PC-9 (cell line): ENCODE measurements at regions of chrX and their contacts with region 1.

Region 1: DNA sequence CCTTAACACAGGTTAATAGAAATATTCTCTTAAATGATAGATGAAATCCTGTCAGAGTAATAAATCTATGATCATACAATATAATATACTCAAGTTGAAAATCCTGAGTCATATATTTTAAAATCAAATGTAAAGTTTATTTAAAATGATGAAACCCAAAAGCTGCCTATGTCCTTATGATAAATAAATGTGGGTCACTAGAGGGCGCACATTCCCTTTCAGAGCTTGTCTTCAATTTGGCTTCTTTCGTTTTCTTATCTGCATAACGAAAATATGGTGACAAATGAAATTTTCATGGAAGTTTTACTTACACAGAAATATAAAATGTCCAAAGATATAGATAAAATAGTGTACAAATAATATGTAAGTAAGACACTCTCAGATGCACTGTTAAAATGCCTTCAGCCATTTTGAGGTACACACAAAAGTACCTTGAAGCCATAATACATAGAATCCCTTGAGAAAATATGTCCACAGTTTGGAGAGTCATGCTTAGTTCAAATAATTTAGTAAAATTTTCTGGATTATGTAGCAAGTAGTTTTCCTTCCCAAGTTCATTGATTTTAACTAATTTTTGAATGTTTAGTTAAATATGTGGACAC is 680.4 kb downstream of the DMD start:
- DNase-seq: peak in 1 of 2 experiments; percentile 0
- H3K4me3 ChIP-seq: no peak overlapping the region; the same call in 1 of the 2 replicates
- H3K27ac ChIP-seq: no peak overlapping the region
- H3K4me1 ChIP-seq: no peaks in the 10 kb centered on the region
- H3K27me3 ChIP-seq: no peaks in the 10 kb centered on the region
- CTCF ChIP-seq: peak; percentile 74

Region 2: DNA sequence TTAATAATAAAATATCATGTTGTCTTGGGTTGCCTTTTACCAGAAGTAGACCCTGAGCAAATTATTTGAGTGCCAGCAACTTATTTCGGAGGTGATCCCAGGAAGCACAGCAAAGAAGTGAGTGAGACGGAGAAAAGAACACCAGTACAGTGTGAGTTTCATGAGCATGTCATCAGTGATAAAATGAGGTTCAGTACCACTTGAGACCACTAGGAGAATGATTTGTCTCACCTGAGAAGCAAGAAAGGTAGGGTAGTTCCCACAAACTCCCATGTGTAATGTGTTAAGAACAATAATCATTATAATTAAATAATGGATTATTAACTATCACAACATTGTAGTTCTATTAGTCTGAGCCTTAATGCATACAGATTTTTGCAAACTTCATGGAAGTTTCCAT is 793.2 kb after region 1 on chrX:
- CTCF ChIA-PET with region 1: interaction called, 12 read pairs
- POLR2A ChIA-PET with region 1: no interaction called
- intact Hi-C with region 1: no loop called
- DNase-seq: no peak
- H3K4me3 ChIP-seq: no peak overlapping the region
- H3K27ac ChIP-seq: no peak overlapping the region
- H3K4me1 ChIP-seq: no peaks in the 10 kb centered on the region
- H3K27me3 ChIP-seq: no peaks in the 10 kb centered on the region
- CTCF ChIP-seq: 0 out of 2 replicates have a peak, but pooled peaks have one; percentile 27

Region 3: DNA sequence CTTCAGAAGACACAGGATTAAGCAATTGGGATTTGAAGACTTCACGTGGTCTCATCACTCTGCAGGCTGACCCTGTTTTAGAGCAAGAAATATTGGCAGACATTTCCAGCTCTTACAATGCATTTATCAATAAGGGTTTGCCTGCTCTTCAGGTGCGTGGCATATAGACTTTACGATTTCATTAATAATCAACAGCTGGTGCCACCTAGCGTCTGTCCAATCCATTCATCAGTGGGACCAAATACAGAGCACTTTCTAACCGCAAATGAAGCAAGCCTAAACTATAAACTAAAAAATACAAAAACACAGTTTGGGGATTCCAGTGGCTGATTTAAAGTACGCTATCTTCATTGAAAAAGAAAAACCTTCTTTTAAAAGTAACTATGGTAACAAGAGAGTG is 805.9 kb after region 1 on chrX:
- CTCF ChIA-PET with region 1: interaction called, 4 read pairs
- POLR2A ChIA-PET with region 1: no interaction called
- intact Hi-C with region 1: loop called (anchors 2 kb)
- DNase-seq: no peak
- H3K4me3 ChIP-seq: no peak overlapping the region
- H3K27ac ChIP-seq: no peak overlapping the region
- H3K4me1 ChIP-seq: no peaks in the 10 kb centered on the region
- H3K27me3 ChIP-seq: no peaks in the 10 kb centered on the region
- CTCF ChIP-seq: peak; percentile 59